ENCODE measurements at regions of chr1 and their contacts with region 1.

Region 1: GRCh38 chr1:184805667-184806295 is 51.1 kb upstream of the EDEM3 start:
- DNase-seq: peak; percentile 68
- H3K4me3 ChIP-seq: no peak overlapping the region
- H3K27ac ChIP-seq: no peak overlapping the region
- H3K27me3 ChIP-seq: no peaks in the 10 kb centered on the region
- CTCF ChIP-seq: peak; percentile 92

Region 2: DNA sequence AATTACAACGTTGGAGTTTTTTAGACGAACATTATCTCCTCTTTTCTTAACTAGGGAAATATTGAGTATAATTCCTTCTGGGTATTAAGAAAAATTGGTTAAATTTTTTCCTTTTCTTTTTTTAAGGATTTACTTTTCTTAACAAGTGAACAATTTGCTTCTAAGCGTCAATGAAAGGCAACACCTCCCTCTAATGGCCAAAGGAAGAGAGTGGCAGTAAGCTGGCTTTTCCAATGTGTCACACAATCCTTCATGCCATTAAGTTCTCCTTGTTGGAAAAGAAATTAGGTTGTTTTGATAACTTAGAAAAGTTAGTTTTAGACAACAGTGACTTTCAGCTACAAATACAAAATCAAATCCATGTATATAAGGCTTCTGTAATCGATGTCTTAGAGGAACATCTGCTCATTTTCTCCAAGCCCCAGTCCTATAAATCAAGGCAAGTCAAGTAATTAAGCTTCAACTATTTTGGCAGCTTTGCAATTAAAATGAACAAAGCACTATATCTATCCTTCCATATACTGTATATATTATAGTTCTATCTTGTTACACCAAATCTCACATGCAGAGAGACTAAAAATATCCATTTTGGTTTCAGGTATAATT is 114.0 kb before region 1 on chr1:
- CTCF ChIA-PET with region 1: no interaction called
- POLR2A ChIA-PET with region 1: no interaction called
- DNase-seq: peak; percentile 3
- H3K4me3 ChIP-seq: no peak overlapping the region
- H3K27ac ChIP-seq: no peak overlapping the region
- H3K27me3 ChIP-seq: no peaks in the 10 kb centered on the region
- CTCF ChIP-seq: peak; percentile 87

Region 3: DNA sequence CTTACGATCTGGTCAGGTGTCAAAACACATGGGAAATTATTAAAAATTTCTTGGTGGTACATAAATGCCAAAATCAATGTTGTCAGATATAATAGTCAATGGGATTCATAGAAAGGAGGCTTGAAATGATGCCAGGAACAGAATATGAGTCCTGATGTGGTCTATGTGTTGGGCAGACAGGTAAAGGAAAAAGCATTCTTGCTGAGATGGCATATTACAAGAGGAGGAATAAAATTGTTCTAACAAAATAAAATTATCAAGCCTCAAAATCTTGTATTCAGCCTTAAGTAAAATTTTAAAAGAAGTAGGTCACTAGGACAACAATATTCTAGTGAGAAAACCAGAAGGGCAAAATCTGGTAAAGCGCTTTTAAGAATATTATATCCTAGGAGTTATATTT is 20.3 kb before region 1 on chr1:
- CTCF ChIA-PET with region 1: no interaction called
- POLR2A ChIA-PET with region 1: no interaction called
- DNase-seq: no peak
- H3K4me3 ChIP-seq: no peak overlapping the region
- H3K27ac ChIP-seq: no peak overlapping the region
- H3K27me3 ChIP-seq: no peaks in the 10 kb centered on the region
- CTCF ChIP-seq: no peak

Region 4: GRCh38 chr1:184818646-184819045 is 12.9 kb after region 1 on chr1:
- CTCF ChIA-PET with region 1: interaction called, 10 read pairs
- POLR2A ChIA-PET with region 1: no interaction called
- DNase-seq: no peak
- H3K4me3 ChIP-seq: no peak overlapping the region
- H3K27ac ChIP-seq: no peak overlapping the region
- H3K27me3 ChIP-seq: no peaks in the 10 kb centered on the region
- CTCF ChIP-seq: no peak

Region 5: GRCh38 chr1:184836934-184837895 is 31.4 kb after region 1 on chr1:
- CTCF ChIA-PET with region 1: interaction called, 10 read pairs
- POLR2A ChIA-PET with region 1: no interaction called
- DNase-seq: no peak
- H3K4me3 ChIP-seq: no peak overlapping the region
- H3K27ac ChIP-seq: no peak overlapping the region
- H3K27me3 ChIP-seq: no peaks in the 10 kb centered on the region
- CTCF ChIP-seq: no peak

Region 6: DNA sequence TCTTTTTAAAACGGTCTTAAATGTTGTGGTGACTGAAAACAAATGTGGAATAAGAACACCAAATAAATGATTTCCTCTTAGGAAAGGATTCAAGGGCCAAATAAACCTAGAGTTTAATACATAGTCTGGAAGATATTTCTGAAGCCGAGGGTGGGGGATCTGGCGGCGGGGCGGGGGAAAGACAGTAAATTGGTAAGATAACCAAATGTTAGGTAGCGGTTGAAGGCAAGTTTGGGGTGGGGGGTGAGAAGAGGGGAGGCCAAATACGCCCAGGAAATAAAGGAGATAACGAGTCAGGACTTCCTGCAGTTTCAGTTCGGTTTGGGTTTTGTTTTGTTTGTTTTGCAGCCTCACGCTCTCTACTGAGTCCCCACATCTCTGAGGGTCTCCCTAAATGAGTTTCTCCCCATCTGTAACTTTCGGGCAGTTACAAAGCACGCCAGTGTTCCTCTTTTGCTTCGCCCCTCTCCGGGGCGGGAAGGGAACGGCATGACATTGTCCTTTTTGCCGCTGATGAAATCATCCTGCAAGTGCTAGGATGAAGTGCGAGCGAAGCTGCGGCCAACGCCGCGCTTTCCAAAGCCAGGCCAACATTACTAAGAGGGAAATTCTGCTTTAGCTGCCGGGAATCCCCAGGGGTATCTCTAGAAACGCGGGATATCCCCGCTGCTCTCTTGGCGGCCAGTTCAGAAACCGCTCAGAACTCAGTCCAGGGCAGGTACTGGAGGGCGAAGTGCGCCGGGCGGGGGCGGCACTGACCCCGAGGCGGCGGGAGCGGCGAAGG is 167.7 kb after region 1 on chr1:
- CTCF ChIA-PET with region 1: interaction called, 114 read pairs
- POLR2A ChIA-PET with region 1: interaction called, 3 read pairs
- DNase-seq: no peak
- H3K4me3 ChIP-seq: peak overlapping the region; percentile 76
- H3K27ac ChIP-seq: peak overlapping the region; percentile 80
- H3K27me3 ChIP-seq: no peaks in the 10 kb centered on the region
- CTCF ChIP-seq: no peak

Region 7: GRCh38 chr1:185156854-185157598 is 351.2 kb after region 1 on chr1 and contains the starts of genes SWT1 and TRMT1L:
- CTCF ChIA-PET with region 1: interaction called, 12 read pairs
- POLR2A ChIA-PET with region 1: no interaction called
- DNase-seq: peak; percentile 97
- H3K4me3 ChIP-seq: peak within 1 kb of the TSS; percentile 84
- H3K27ac ChIP-seq: peak within 1 kb of the TSS; percentile 97
- H3K27me3 ChIP-seq: no peaks in the 10 kb centered on the region
- CTCF ChIP-seq: no peak
- polyA plus RNA-seq, gene SWT1: 2.9 and 3.6 TPM in 2 replicates
- polyA plus RNA-seq, gene TRMT1L: 26.1 and 33.4 TPM in 2 replicates